Activated naive CD4-positive, alpha-beta T cell treated with anti-CD3 and anti-CD28 coated beads, Interleukin-2, amount 10 ng/mL, durations not matched to agents 7 days and 5 days (primary cell): ENCODE measurements at regions of chr19 and their contacts with region 1.

Region 1: DNA sequence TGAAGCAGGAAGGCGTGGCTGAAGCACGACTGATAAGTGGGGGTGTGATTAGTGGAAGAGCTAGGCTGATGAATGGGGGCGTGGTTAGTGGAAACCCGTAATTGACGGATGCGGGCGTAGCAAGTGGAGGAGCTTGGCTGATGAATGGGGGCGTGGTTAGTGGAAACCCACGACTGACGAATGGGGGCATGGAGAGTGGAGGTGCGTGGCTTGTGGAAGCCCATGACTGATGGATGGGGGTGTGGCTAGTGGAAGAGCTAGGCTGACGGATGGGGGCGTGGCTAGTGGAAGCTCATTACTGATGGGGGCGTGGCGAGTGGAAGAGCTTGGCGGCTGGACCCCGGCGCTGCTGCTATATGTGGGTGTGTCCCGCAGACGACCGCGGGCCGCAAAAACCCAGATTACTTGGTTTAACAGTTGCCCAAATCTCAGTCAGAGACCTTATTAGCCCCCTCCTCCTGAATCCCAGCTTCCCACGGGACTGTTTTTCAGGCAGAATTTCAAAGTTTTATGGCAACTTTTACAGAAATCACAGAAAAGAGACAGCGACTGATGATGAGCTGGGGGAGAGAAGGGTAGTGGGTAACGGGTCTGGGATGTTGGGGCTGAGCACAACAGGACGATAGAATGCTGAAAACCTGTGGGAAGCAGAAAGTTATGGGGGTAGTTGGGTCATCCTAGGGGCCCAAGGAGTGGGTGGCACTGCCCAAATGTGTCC is 9.0 kb upstream of the MEIS3 start:
- DNase-seq: peak; percentile 91
- H3K4me3 Mint-ChIP-seq: no peak overlapping the region
- H3K27ac Mint-ChIP-seq: no peak overlapping the region
- H3K4me1 Mint-ChIP-seq: peaks cover 34% of the 10 kb centered on the region
- H3K27me3 Mint-ChIP-seq: peaks cover 15% of the 10 kb centered on the region

Region 2: GRCh38 chr19:47296036-47296435 is 132.3 kb before region 1 on chr19:
- CTCF ChIA-PET with region 1: interaction called, 12 read pairs
- DNase-seq: peak; percentile 84
- H3K4me3 Mint-ChIP-seq: no peak overlapping the region
- H3K27ac Mint-ChIP-seq: no peak overlapping the region
- H3K4me1 Mint-ChIP-seq: peaks cover 13% of the 10 kb centered on the region
- H3K27me3 Mint-ChIP-seq: no peaks in the 10 kb centered on the region

Region 3: GRCh38 chr19:47348819-47349795 is 79.2 kb before region 1 on chr19 and contains the start of gene DHX34:
- CTCF ChIA-PET with region 1: interaction called, 19 read pairs
- DNase-seq: peak; percentile 99
- H3K4me3 Mint-ChIP-seq: peak within 1 kb of the TSS; percentile 95
- H3K27ac Mint-ChIP-seq: peak within 1 kb of the TSS; percentile 76
- H3K4me1 Mint-ChIP-seq: peaks cover 35% of the 10 kb centered on the region
- H3K27me3 Mint-ChIP-seq: peaks cover 5% of the 10 kb centered on the region

Region 4: DNA sequence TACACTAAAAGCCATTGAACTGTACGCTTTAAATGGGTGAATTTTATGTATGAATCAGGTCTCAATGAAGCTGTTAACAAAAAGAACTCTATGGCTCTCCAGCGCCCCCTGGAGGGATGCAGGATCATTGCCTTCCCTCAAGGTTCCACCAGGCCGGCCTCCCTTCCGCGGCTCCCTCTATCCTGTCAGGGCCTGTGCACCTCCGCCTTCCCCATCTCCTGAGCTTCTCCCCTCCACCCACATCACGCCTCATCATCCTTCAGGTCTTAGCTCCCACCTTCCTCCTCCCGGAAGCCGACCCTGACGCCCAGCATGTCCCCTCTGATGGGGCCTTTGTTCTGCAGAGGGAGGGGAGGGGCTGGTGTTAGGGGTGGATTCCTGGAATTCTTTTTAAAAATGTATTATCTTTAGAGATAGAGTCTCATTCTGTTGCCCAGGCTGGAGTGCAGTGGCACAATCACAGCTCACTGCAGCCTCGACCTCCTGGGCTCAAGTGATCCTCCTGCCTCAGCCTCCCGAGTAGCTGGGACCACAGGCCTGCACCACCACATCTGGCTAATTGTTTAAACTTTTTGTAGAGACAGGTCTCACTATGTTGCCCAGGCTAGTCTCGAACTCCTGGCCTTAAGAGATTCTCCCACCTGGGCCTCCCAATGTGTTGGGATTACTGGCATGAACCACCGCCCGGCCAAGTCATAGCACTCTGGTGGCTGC is 36.7 kb before region 1 on chr19:
- CTCF ChIA-PET with region 1: interaction called, 11 read pairs
- DNase-seq: peak; percentile 90
- H3K4me3 Mint-ChIP-seq: no peak overlapping the region
- H3K27ac Mint-ChIP-seq: no peak overlapping the region
- H3K4me1 Mint-ChIP-seq: peaks cover 14% of the 10 kb centered on the region
- H3K27me3 Mint-ChIP-seq: peaks cover 19% of the 10 kb centered on the region

Region 5: GRCh38 chr19:47414469-47414868 is 13.9 kb before region 1 on chr19:
- CTCF ChIA-PET with region 1: interaction called, 10 read pairs
- DNase-seq: no peak
- H3K4me3 Mint-ChIP-seq: no peak overlapping the region
- H3K27ac Mint-ChIP-seq: no peak overlapping the region
- H3K4me1 Mint-ChIP-seq: peaks cover 9% of the 10 kb centered on the region
- H3K27me3 Mint-ChIP-seq: peaks cover 61% of the 10 kb centered on the region

Region 6: GRCh38 chr19:47697863-47698609 is 269.7 kb after region 1 on chr19:
- CTCF ChIA-PET with region 1: interaction called, 158 read pairs
- DNase-seq: peak; percentile 71
- H3K4me3 Mint-ChIP-seq: no peak overlapping the region
- H3K27ac Mint-ChIP-seq: no peak overlapping the region
- H3K4me1 Mint-ChIP-seq: peaks cover 4% of the 10 kb centered on the region
- H3K27me3 Mint-ChIP-seq: no peaks in the 10 kb centered on the region

Region 7: GRCh38 chr19:47707135-47707925 is 279.0 kb after region 1 on chr19:
- CTCF ChIA-PET with region 1: interaction called, 158 read pairs
- DNase-seq: peak; percentile 87
- H3K4me3 Mint-ChIP-seq: no peak overlapping the region
- H3K27ac Mint-ChIP-seq: no peak overlapping the region
- H3K4me1 Mint-ChIP-seq: peaks cover 3% of the 10 kb centered on the region
- H3K27me3 Mint-ChIP-seq: peaks cover 37% of the 10 kb centered on the region